Activated naive CD8-positive, alpha-beta T cell treated with anti-CD3 and anti-CD28 coated beads, Interleukin-2, amount 10 ng/mL, durations not matched to agents 7 days and 5 days (primary cell): ENCODE measurements at regions of chr1 and their contacts with region 1.

Region 1: GRCh38 chr1:150629115-150629928 is at the start of gene ENSA:
- DNase-seq: peak; percentile 91
- ATAC-seq: peak; percentile 91
- H3K4me3 Mint-ChIP-seq: no peak within 1 kb of the TSS
- H3K27ac Mint-ChIP-seq: no peak within 1 kb of the TSS
- H3K4me1 Mint-ChIP-seq: peaks cover 31% of the 10 kb centered on the region
- H3K27me3 Mint-ChIP-seq: no peaks in the 10 kb centered on the region
- total RNA-seq, gene ENSA: 161 to 172 TPM

Region 2: DNA sequence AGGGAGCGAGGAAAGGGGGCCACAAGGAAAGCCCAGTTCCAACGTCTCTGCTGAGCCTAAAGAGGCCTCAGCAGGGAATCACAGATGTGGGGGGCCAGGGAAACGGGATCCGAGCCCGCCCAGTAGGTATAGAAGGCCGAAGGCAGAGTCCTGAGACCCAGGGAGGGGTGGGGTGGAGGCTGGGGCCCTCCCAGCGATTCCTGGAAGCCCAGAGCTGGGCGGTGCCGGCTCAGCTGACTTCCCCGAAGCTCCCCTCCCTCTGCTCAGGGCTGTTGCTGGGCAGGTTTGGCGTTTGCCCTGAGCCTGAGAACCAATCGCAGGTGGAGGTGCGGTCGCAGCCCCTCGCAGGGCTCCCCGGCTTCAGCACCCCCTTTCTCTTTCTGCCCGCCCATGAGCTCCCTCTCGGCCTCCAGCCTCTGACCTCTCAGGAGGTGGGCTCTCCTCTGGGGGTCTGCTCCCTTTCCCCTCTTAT is 67.3 kb before region 1 on chr1:
- POLR2A ChIA-PET with region 1: interaction called, 75 read pairs
- DNase-seq: peak; percentile 87
- ATAC-seq: peak; percentile 61
- H3K4me3 Mint-ChIP-seq: peak overlapping the region; percentile 97
- H3K27ac Mint-ChIP-seq: peak overlapping the region; percentile 100
- H3K4me1 Mint-ChIP-seq: peaks cover 43% of the 10 kb centered on the region
- H3K27me3 Mint-ChIP-seq: no peaks in the 10 kb centered on the region

Region 3: DNA sequence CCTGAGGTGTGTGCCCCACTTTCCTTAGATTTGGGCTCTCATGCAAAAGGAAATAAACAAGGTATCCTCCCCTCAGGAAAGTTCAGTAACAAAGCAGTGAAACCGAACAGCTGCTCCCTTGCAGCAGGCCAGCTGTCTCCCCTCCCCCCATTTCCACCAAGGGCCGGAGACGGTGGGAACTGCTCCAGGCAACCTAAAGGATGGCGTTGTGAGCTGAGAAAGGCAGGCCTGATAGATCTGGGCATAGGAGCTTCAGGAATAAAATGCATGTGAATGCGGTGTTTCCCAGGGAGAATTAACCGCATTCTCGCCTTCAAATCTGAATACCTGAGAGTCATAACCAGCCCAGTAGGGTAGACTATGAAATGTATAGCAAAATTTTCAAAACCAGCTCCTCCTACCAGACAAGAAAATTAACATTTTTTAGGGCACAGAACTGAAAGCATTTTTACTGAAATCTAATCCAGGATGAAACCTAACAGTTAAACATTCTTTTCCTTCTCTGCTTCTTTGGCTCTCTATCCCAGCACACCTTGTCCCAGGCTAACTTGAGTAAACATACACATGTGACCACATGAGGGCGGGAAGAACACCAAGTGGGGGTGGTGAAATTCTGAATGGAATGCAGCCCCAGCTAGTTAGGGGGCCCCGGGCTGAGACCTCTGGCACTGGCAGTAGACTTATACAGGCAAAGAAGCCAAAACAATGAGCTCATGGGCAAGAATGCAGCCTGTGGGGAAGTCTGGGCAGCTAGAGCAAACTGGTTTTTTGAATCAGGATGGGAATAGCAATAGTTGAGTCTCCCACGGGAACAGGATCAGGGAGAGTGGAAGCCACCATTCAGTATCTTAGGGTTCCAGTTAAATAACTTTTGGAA is 61.4 kb before region 1 on chr1:
- POLR2A ChIA-PET with region 1: interaction called, 75 read pairs
- DNase-seq: peak; percentile 72
- ATAC-seq: peak; percentile 10
- H3K4me3 Mint-ChIP-seq: peak overlapping the region; percentile 81
- H3K27ac Mint-ChIP-seq: peak overlapping the region; percentile 96
- H3K4me1 Mint-ChIP-seq: peaks cover 72% of the 10 kb centered on the region
- H3K27me3 Mint-ChIP-seq: no peaks in the 10 kb centered on the region

Region 4: GRCh38 chr1:150613061-150613920 is 16.0 kb before region 1 on chr1:
- POLR2A ChIA-PET with region 1: interaction called, 23 read pairs
- DNase-seq: no peak
- ATAC-seq: peak; percentile 48
- H3K4me3 Mint-ChIP-seq: peak overlapping the region; percentile 55
- H3K27ac Mint-ChIP-seq: peak overlapping the region; percentile 83
- H3K4me1 Mint-ChIP-seq: peaks cover 49% of the 10 kb centered on the region
- H3K27me3 Mint-ChIP-seq: no peaks in the 10 kb centered on the region

Region 5: GRCh38 chr1:150696590-150697524 is 67.5 kb after region 1 on chr1 and contains the start of gene GOLPH3L:
- POLR2A ChIA-PET with region 1: interaction called, 15 read pairs
- DNase-seq: peak; percentile 79
- ATAC-seq: peak; percentile 100
- H3K4me3 Mint-ChIP-seq: peak within 1 kb of the TSS; percentile 99
- H3K27ac Mint-ChIP-seq: peak within 1 kb of the TSS; percentile 90
- H3K4me1 Mint-ChIP-seq: peaks cover 18% of the 10 kb centered on the region
- H3K27me3 Mint-ChIP-seq: peaks cover 12% of the 10 kb centered on the region
- total RNA-seq, gene GOLPH3L: 22.2 to 22.6 TPM

Region 6: DNA sequence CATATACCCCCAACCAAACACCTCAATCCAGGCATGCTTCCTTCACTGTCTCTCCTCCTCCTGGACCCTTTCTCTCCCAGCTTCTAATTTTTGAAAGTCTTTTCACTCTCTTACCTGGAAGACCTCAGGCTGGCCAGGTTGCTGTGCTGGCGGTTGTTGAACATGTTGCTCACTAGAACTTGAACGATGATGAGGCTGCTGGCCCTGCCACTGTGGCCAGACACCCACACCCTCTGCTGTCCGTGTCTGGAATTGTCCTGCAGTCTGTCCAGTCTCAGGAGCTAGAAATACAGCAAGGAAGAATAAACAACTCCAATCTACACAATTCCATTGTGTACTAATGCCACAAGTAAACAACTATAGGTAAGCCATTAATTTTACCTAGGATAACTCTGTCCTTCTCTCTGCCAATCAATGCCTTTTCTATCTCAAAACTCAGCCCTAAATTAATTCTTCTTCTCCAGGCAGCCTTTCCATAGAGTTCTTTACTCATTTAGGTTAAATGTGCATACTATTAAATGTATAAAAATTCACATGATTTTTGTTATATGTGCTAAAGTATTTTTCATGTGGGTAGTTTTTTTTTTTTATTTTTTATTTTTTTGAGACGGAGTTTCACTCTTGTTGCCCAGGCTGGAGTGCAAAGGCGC is 183.9 kb after region 1 on chr1:
- POLR2A ChIA-PET with region 1: no interaction called
- DNase-seq: no peak
- ATAC-seq: no peak
- H3K4me3 Mint-ChIP-seq: no peak overlapping the region
- H3K27ac Mint-ChIP-seq: no peak overlapping the region
- H3K4me1 Mint-ChIP-seq: peaks cover under 1% of the 10 kb centered on the region
- H3K27me3 Mint-ChIP-seq: no peaks in the 10 kb centered on the region